Heart right ventricle (tissue), 16 donors: ENCODE measurements at regions of chr7 and their contacts with region 1.

Region 1: GRCh38 chr7:112206238-112207044 is at the starts of genes DOCK4 and ZNF277:
- DNase-seq: peak; percentile 99
- ATAC-seq: peak; percentile 96 to 99 (median 96)
- H3K4me3 ChIP-seq: peak within 1 kb of the TSS; percentile 71 to 98 (median 92)
- H3K27ac ChIP-seq: peak within 1 kb of the TSS; percentile 78 to 95 (median 92)
- H3K4me1 ChIP-seq: peaks cover 2 to 46% (median 34%) of the 10 kb centered on the region in 9 donors
- H3K27me3 ChIP-seq: peaks cover 0 to 12% (median 0%) of the 10 kb centered on the region in 7 donors
- CTCF ChIP-seq: peak in 1 of 9 donors; percentile 10
- total RNA-seq, gene DOCK4: 10.8 to 26.8 (median 16.4) TPM
- total RNA-seq, gene ZNF277: 14.1 to 25.7 (median 17.6) TPM

Region 2: GRCh38 chr7:111953611-111954010 is 252.8 kb before region 1 on chr7:
- intact Hi-C with region 1: loop called in 5 of 10 experiments (anchors 5 to 10 kb)
- DNase-seq: peak in 1 of 2 donors; percentile 26
- ATAC-seq: peak; percentile 60 to 85 (median 75)
- H3K4me3 ChIP-seq: no peak overlapping the region
- H3K27ac ChIP-seq: peak overlapping the region in 4 of 10 donors; percentile 18 to 61 (median 55)
- H3K4me1 ChIP-seq: peaks cover 5 to 48% (median 29%) of the 10 kb centered on the region in 9 donors
- H3K27me3 ChIP-seq: no peaks in the 10 kb centered on the region
- CTCF ChIP-seq: peak in 6 of 9 donors; percentile 14 to 56 (median 38)

Region 3: GRCh38 chr7:111987115-111987826 is 219.2 kb before region 1 on chr7:
- intact Hi-C with region 1: loop called in 1 of 10 experiments (anchors 10 kb)
- DNase-seq: peak in 1 of 2 donors; percentile 40
- ATAC-seq: peak; percentile 62 to 87 (median 80)
- H3K4me3 ChIP-seq: peak overlapping the region in 1 of 10 donors; percentile 0
- H3K27ac ChIP-seq: peak overlapping the region in 9 of 10 donors; percentile 0 to 86 (median 63)
- H3K4me1 ChIP-seq: peaks cover 0 to 30% (median 10%) of the 10 kb centered on the region in 9 donors
- H3K27me3 ChIP-seq: no peaks in the 10 kb centered on the region
- CTCF ChIP-seq: no peak

Region 4: GRCh38 chr7:112092709-112093395 is 113.6 kb before region 1 on chr7:
- intact Hi-C with region 1: loop called in 4 of 10 experiments (anchors 10 kb)
- DNase-seq: no peak
- ATAC-seq: no peak
- H3K4me3 ChIP-seq: no peak overlapping the region
- H3K27ac ChIP-seq: no peak overlapping the region
- H3K4me1 ChIP-seq: peaks cover 0 to 26% (median 3%) of the 10 kb centered on the region in 9 donors
- H3K27me3 ChIP-seq: no peaks in the 10 kb centered on the region
- CTCF ChIP-seq: no peak

Region 5: GRCh38 chr7:112143582-112143981 is 62.9 kb before region 1 on chr7:
- intact Hi-C with region 1: loop called in 2 of 10 experiments (anchors 5 to 10 kb)
- DNase-seq: no peak
- ATAC-seq: peak in 7 of 8 donors; percentile 30 to 78 (median 63)
- H3K4me3 ChIP-seq: no peak overlapping the region
- H3K27ac ChIP-seq: peak overlapping the region in 1 of 10 donors; percentile 37
- H3K4me1 ChIP-seq: peaks cover 8 to 56% (median 21%) of the 10 kb centered on the region in 9 donors
- H3K27me3 ChIP-seq: no peaks in the 10 kb centered on the region
- CTCF ChIP-seq: no peak

Region 6: DNA sequence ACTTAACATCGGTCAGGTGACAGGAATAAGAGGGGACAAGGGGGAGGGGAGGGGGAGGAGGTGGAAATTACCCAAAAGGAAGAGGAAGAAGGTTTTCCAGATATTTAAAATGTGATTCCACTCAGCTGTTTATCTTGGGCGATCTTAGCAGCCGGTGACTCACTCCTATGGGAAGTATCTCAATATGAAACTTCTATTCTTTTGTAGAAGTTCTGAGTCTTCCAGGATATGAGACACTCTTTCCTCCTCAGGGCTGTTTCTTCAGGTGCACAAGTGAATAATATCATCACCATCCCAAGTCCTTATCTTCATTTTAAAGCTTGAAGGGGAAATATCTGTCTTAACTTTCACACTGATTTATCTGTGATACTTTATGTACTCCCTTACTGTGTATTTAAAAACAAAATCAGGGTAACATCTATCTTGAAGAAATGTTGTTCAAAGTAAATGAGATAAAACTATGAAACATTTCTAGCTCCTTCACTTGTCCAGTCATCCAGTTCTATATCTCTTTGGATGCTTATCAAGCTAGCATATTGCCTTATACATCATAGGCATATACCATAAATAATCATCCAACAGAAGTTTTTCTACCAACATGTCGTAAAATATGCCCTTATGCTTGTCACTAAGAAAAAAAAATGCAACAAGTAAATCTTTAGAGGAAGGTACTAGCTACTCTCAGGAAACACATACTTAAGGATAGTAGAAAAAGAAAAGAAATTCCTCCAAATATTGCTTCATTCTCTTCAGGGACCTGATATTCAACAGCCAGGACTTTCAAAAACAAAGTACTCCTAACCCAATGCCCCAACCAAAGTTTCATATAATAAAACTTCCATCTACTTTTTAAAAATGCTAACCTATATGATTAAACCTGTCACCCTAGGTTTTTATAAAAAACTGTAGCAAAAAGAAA is 13.9 kb before region 1 on chr7:
- intact Hi-C with region 1: no loop called
- DNase-seq: peak in 1 of 2 donors; percentile 54
- ATAC-seq: peak; percentile 58 to 94 (median 79)
- H3K4me3 ChIP-seq: no peak overlapping the region
- H3K27ac ChIP-seq: peak overlapping the region in 6 of 10 donors; percentile 27 to 69 (median 42)
- H3K4me1 ChIP-seq: peaks cover 0 to 41% (median 13%) of the 10 kb centered on the region in 9 donors
- H3K27me3 ChIP-seq: no peaks in the 10 kb centered on the region
- CTCF ChIP-seq: no peak

Region 7: DNA sequence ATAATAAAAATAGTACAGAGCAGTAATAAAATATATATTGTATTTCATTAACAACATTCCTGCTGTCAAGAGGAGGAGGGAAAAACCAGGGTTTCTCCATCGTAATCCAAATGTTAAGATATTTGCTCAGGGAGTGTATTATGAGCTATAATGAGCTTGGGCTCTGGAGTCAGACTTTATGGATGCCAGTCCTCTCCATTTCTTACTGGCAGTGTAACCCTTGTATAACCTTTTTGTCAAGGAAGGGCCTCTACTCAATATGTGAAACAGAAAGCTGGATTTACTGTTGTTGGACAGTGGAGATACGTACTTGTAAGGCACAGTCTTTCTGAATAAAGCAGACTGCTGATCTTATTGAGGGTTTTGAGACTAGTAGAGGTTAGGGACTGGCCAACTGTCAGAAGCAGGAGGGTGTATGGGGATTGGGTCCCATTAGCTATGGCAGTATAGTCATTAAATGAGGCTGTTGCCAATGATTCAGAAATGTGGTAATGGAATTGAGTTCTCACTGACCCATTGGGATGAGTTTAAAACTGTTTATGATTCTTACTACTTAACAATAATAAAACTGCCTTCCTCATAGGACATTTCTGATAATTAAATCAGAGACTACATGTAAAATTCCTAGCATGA is 56.5 kb after region 1 on chr7:
- intact Hi-C with region 1: no loop called
- DNase-seq: no peak
- ATAC-seq: no peak
- H3K4me3 ChIP-seq: no peak overlapping the region
- H3K27ac ChIP-seq: no peak overlapping the region
- H3K4me1 ChIP-seq: peaks cover 0 to 28% (median 18%) of the 10 kb centered on the region in 9 donors
- H3K27me3 ChIP-seq: no peaks in the 10 kb centered on the region
- CTCF ChIP-seq: no peak

Region 8: DNA sequence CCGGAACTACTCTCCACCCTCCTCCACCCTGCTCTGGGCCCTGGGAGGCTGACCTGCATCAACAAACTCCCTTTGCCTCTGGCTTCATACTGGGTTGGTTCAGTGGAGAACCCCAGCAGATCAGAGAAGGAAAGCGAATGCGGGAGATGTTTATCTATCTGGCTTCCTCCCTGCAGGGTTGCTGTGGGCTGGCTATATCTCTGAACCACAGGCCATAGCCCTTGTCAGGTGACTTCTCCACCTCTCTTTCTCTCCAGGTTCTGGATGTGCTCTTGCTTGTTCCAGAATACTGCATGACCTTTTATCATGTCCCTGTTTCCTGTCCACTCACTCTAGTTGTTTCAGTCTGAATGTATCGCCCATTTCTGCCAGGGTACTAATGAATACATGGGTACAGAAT is 192.1 kb after region 1 on chr7:
- intact Hi-C with region 1: loop called in 2 of 10 experiments (anchors 10 kb)
- DNase-seq: no peak
- ATAC-seq: no peak
- H3K4me3 ChIP-seq: no peak overlapping the region
- H3K27ac ChIP-seq: no peak overlapping the region
- H3K4me1 ChIP-seq: no peaks in the 10 kb centered on the region
- H3K27me3 ChIP-seq: peaks cover 0 to 9% (median 0%) of the 10 kb centered on the region in 7 donors
- CTCF ChIP-seq: no peak